CD8-positive, alpha-beta T cell (primary cell): ENCODE measurements at regions of chr9 and their contacts with region 1.

Region 1: GRCh38 chr9:6024020-6024554 is 8.7 kb upstream of the RANBP6 start:
- DNase-seq: peak in 4 of 9 experiments; percentile 5 to 69 (median 38)
- ATAC-seq: peak; percentile 96
- H3K4me3 ChIP-seq: no peak overlapping the region
- H3K4me3 Mint-ChIP-seq: no peak overlapping the region
- H3K27ac ChIP-seq: no peak overlapping the region
- H3K27ac Mint-ChIP-seq: no peak overlapping the region
- H3K4me1 ChIP-seq: peaks cover 3% of the 10 kb centered on the region
- H3K4me1 Mint-ChIP-seq: peaks cover 4% of the 10 kb centered on the region
- H3K27me3 ChIP-seq: no peaks in the 10 kb centered on the region
- H3K27me3 Mint-ChIP-seq: peaks cover 6% of the 10 kb centered on the region
- CTCF ChIP-seq: peak; percentile 55

Region 2: GRCh38 chr9:5988265-5988664 is 35.8 kb before region 1 on chr9:
- CTCF ChIA-PET with region 1: no interaction called
- POLR2A ChIA-PET with region 1: no interaction called
- intact Hi-C with region 1: loop called in 1 of 2 experiments (anchors 5 kb)
- DNase-seq: no peak
- ATAC-seq: no peak
- H3K4me3 ChIP-seq: no peak overlapping the region
- H3K4me3 Mint-ChIP-seq: no peak overlapping the region
- H3K27ac ChIP-seq: no peak overlapping the region
- H3K27ac Mint-ChIP-seq: no peak overlapping the region
- H3K4me1 ChIP-seq: no peaks in the 10 kb centered on the region
- H3K4me1 Mint-ChIP-seq: peaks cover 36% of the 10 kb centered on the region
- H3K27me3 ChIP-seq: no peaks in the 10 kb centered on the region
- H3K27me3 Mint-ChIP-seq: no peaks in the 10 kb centered on the region
- CTCF ChIP-seq: no peak

Region 3: DNA sequence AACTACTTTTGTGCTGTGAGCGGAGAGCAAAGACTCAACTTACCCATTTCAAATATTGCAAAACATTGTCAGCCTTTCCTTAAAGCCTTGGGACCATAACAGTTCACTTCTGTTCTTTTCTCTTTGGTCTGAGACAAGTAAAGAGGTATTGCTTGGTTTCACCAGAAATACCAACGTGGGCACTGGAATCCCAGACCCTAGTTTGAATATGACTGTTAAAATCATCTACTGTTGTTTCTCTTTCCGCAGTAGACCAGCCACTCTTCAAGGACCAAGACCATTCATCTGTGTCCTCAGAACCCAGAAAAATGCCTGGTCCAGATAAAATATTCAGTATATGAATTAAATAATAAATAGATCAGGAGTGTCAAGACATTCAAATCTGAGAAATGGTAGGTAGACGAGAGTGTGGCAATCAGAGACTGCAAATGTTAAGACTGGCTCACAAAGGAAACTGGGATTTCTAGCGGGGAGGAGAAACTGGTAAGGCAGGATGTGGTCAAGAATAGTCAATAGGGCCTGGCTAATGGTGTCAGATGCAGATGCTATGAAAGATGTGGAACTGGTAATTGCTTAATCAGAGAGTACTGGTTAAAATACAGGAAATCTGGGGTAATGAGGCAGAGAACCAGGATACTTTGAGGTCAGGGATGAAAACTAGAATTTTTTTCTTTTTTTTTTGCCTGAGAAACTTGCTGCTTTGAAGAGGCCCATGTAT is 109.4 kb after region 1 on chr9:
- CTCF ChIA-PET with region 1: no interaction called
- POLR2A ChIA-PET with region 1: no interaction called
- intact Hi-C with region 1: no loop called
- DNase-seq: peak in 1 of 9 experiments; percentile 9
- ATAC-seq: no peak
- H3K4me3 ChIP-seq: no peak overlapping the region
- H3K4me3 Mint-ChIP-seq: no peak overlapping the region
- H3K27ac ChIP-seq: no peak overlapping the region
- H3K27ac Mint-ChIP-seq: no peak overlapping the region
- H3K4me1 ChIP-seq: no peaks in the 10 kb centered on the region
- H3K4me1 Mint-ChIP-seq: peaks cover 3% of the 10 kb centered on the region
- H3K27me3 ChIP-seq: no peaks in the 10 kb centered on the region
- H3K27me3 Mint-ChIP-seq: peaks cover 8% of the 10 kb centered on the region
- CTCF ChIP-seq: no peak

Region 4: DNA sequence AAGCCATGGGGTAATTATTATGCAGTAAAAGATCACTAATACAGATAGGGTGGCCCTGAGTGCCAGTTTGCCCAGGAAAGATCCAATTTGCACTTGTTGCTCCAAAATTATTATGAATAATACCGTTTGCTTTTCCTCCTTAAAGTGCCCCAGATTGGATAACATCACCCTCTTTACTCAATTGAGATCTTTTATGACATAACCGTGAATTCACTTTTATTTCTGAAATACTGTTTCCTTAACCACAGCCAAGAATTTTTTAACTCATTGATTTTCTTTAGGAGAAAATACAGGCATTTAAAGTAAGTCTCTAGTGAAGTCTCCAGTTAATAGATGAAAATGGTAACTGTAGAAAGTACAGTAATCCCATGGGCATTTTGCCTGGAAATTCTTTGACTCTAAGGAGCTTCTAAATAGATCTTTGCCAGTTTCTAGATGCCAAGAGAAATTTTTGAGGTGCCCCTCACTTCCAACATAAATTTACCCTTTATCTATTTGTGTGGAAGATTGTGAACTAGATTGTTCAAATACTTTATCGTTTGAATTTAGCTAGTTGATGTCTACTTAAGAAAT is 488.1 kb after region 1 on chr9:
- CTCF ChIA-PET with region 1: no interaction called
- POLR2A ChIA-PET with region 1: no interaction called
- intact Hi-C with region 1: no loop called
- DNase-seq: no peak
- ATAC-seq: no peak
- H3K4me3 ChIP-seq: no peak overlapping the region
- H3K4me3 Mint-ChIP-seq: no peak overlapping the region
- H3K27ac ChIP-seq: no peak overlapping the region
- H3K27ac Mint-ChIP-seq: no peak overlapping the region
- H3K4me1 ChIP-seq: no peaks in the 10 kb centered on the region
- H3K4me1 Mint-ChIP-seq: no peaks in the 10 kb centered on the region
- H3K27me3 ChIP-seq: no peaks in the 10 kb centered on the region
- H3K27me3 Mint-ChIP-seq: no peaks in the 10 kb centered on the region
- CTCF ChIP-seq: no peak